CD4-positive, alpha-beta T cell (primary cell): ENCODE measurements at regions of chr19 and their contacts with region 1.

Region 1: DNA sequence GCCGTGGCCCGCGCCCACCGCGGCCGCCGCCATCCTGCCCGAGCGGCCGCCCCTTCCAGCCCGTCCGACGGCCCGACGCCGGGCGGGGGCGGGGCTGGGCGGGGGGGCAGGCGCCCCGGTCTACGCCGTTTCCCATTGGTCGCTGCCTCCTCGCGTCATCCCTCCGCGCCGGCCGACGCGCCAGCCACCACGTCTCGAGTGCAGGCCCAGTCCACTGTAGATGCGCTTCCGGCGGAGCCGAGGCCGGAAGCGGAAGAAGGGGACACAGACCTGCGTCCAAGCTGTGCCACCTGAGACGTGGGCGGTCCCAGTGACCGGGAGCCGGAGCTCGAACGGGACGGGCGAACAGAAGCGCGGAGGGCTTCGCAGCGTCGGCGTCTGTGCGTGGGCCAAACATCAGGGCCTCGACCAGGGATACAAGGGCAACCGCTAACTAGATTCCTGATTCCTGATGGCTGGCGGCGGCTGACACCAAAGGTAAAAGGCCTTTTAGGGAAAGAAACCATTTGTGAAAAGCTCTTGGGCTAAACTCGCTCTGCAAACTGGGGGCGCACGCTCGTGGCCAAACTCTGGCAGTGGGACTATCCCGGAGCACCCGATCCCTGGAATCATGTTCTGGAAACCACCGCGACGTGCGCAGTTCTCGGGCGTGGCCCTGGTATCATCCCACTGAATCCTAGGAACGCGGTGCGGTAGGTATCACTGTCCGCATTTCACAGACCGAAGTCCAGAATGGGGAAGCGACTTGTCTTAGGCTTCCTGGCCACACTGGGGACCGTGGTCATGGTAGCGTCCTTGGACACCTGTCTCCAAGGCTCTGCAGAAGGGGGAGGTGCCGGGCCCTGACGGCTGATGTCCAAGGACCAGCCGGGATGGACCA is at the start of gene SLC35E1:
- DNase-seq: peak; percentile 82 to 96 (median 88)
- ATAC-seq: peak; percentile 90
- H3K4me3 ChIP-seq: peak within 1 kb of the TSS; percentile 100
- H3K4me3 Mint-ChIP-seq: peak within 1 kb of the TSS; percentile 91
- H3K27ac ChIP-seq: peak within 1 kb of the TSS; percentile 89 to 97
- H3K27ac Mint-ChIP-seq: peak within 1 kb of the TSS; percentile 90
- H3K4me1 ChIP-seq: peaks cover 72% of the 10 kb centered on the region
- H3K4me1 Mint-ChIP-seq: peaks cover 60% of the 10 kb centered on the region
- H3K27me3 ChIP-seq: no peaks in the 10 kb centered on the region
- H3K27me3 Mint-ChIP-seq: no peaks in the 10 kb centered on the region
- CTCF ChIP-seq: no peak
- total RNA-seq, gene SLC35E1: 72.3 to 76.3 TPM

Region 2: GRCh38 chr19:16495982-16496612 is 76.5 kb before region 1 on chr19 and contains the starts of genes C19orf44 and CALR3:
- CTCF ChIA-PET with region 1: no interaction called
- POLR2A ChIA-PET with region 1: interaction called, 3 read pairs
- intact Hi-C with region 1: loop called in 1 of 2 experiments (anchors 1 kb)
- DNase-seq: peak; percentile 93 to 98 (median 96)
- ATAC-seq: peak; percentile 99
- H3K4me3 ChIP-seq: peak within 1 kb of the TSS; percentile 64
- H3K4me3 Mint-ChIP-seq: peak within 1 kb of the TSS; percentile 90
- H3K27ac ChIP-seq: no peak within 1 kb of the TSS
- H3K27ac Mint-ChIP-seq: peak within 1 kb of the TSS; percentile 71
- H3K4me1 ChIP-seq: peaks cover 15% of the 10 kb centered on the region
- H3K4me1 Mint-ChIP-seq: peaks cover 14% of the 10 kb centered on the region
- H3K27me3 ChIP-seq: no peaks in the 10 kb centered on the region
- H3K27me3 Mint-ChIP-seq: no peaks in the 10 kb centered on the region
- CTCF ChIP-seq: no peak
- total RNA-seq, gene C19orf44: 0.78 to 1.0 TPM
- total RNA-seq, gene CALR3: not detected

Region 3: GRCh38 chr19:16584248-16585141 is 11.9 kb after region 1 on chr19:
- CTCF ChIA-PET with region 1: interaction called, 4 read pairs
- POLR2A ChIA-PET with region 1: interaction called, 26 read pairs
- intact Hi-C with region 1: loop called (anchors 1 kb)
- DNase-seq: peak; percentile 74 to 98 (median 88)
- ATAC-seq: peak; percentile 78
- H3K4me3 ChIP-seq: peak overlapping the region; percentile 46
- H3K4me3 Mint-ChIP-seq: peak overlapping the region; percentile 81
- H3K27ac ChIP-seq: peak overlapping the region; percentile 77 to 85
- H3K27ac Mint-ChIP-seq: peak overlapping the region; percentile 98
- H3K4me1 ChIP-seq: peaks cover 90% of the 10 kb centered on the region
- H3K4me1 Mint-ChIP-seq: peaks cover 81% of the 10 kb centered on the region
- H3K27me3 ChIP-seq: no peaks in the 10 kb centered on the region
- H3K27me3 Mint-ChIP-seq: no peaks in the 10 kb centered on the region
- CTCF ChIP-seq: no peak

Region 4: GRCh38 chr19:16594131-16594586 is 21.6 kb after region 1 on chr19:
- CTCF ChIA-PET with region 1: no interaction called
- POLR2A ChIA-PET with region 1: interaction called, 11 read pairs
- intact Hi-C with region 1: no loop called
- DNase-seq: peak in 9 of 14 experiments; percentile 17 to 85 (median 37)
- ATAC-seq: peak; percentile 50
- H3K4me3 ChIP-seq: peak overlapping the region; percentile 38
- H3K4me3 Mint-ChIP-seq: peak overlapping the region; percentile 83
- H3K27ac ChIP-seq: peak overlapping the region; percentile 59 to 82
- H3K27ac Mint-ChIP-seq: peak overlapping the region; percentile 89
- H3K4me1 ChIP-seq: peaks cover 70% of the 10 kb centered on the region
- H3K4me1 Mint-ChIP-seq: peaks cover 83% of the 10 kb centered on the region
- H3K27me3 ChIP-seq: no peaks in the 10 kb centered on the region
- H3K27me3 Mint-ChIP-seq: no peaks in the 10 kb centered on the region
- CTCF ChIP-seq: no peak

Region 5: DNA sequence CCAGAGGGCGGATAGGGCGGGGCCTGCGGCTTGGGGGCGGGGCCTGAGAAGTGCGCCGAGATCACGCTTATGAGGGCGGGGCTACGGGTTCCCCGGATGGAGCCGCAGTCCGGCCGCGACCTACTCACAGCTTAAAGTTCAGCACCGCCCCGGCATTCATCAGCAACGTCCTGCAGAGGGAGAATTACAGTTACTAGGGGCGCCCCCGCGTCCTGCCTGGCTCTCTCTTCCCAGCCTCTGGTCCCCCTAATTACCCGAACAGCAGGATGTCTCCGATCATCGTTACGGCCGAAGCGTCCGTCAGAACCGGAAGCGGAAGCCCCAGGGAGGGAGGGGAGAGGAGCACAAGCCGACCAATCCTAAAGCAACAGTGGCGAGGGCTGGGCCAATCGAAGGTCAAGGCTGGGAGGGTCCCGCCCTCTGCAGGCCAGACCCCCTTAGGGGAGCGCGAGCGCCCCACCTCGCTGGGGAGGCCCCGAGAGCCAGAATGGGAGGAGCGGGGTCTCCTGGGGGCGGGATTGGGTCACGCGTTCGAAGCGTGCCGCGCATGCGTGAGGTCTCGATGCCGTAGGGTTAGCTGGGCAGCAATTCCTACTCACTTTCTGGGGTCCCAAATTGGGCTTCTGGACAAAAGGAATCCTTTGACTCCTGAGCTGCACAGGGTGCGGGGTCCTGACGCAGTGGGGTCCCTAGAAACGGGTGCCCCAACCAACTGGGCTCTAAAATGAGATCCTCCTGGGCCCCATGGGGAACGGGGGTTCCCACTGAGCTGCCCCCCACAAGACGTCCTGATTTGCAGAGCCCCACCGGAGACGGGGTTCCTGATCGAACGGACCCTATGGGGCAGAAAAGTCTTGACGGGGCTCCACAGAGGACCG is 87.5 kb after region 1 on chr19 and contains the start of gene SMIM7:
- CTCF ChIA-PET with region 1: interaction called, 3 read pairs
- POLR2A ChIA-PET with region 1: interaction called, 12 read pairs
- intact Hi-C with region 1: no loop called
- DNase-seq: peak; percentile 97 to 100 (median 98)
- ATAC-seq: peak; percentile 96
- H3K4me3 ChIP-seq: peak within 1 kb of the TSS; percentile 92
- H3K4me3 Mint-ChIP-seq: peak within 1 kb of the TSS; percentile 100
- H3K27ac ChIP-seq: peak within 1 kb of the TSS; percentile 75 to 93
- H3K27ac Mint-ChIP-seq: peak within 1 kb of the TSS; percentile 98
- H3K4me1 ChIP-seq: peaks cover 51% of the 10 kb centered on the region
- H3K4me1 Mint-ChIP-seq: peaks cover 50% of the 10 kb centered on the region
- H3K27me3 ChIP-seq: no peaks in the 10 kb centered on the region
- H3K27me3 Mint-ChIP-seq: no peaks in the 10 kb centered on the region
- CTCF ChIP-seq: no peak
- total RNA-seq, gene SMIM7: 44.3 to 47.4 TPM

Region 6: GRCh38 chr19:16764793-16765433 is 192.3 kb after region 1 on chr19:
- CTCF ChIA-PET with region 1: no interaction called
- POLR2A ChIA-PET with region 1: no interaction called
- intact Hi-C with region 1: no loop called
- DNase-seq: no peak
- ATAC-seq: no peak
- H3K4me3 ChIP-seq: no peak overlapping the region
- H3K4me3 Mint-ChIP-seq: no peak overlapping the region
- H3K27ac ChIP-seq: no peak overlapping the region
- H3K27ac Mint-ChIP-seq: no peak overlapping the region
- H3K4me1 ChIP-seq: no peaks in the 10 kb centered on the region
- H3K4me1 Mint-ChIP-seq: no peaks in the 10 kb centered on the region
- H3K27me3 ChIP-seq: peaks cover 14 to 27% of the 10 kb centered on the region in 2 experiments
- H3K27me3 Mint-ChIP-seq: peaks cover 58% of the 10 kb centered on the region
- CTCF ChIP-seq: no peak